Adrenal gland (tissue), 19 donors: ENCODE measurements at regions of chr1 and their contacts with region 1.

Region 1: GRCh38 chr1:182299728-182300616 is 91.6 kb downstream of the GLUL start:
- DNase-seq: peak; percentile 35 to 72 (median 54)
- H3K4me3 ChIP-seq: no peak overlapping the region
- H3K27ac ChIP-seq: peak overlapping the region in 1 of 5 donors; percentile 8
- H3K4me1 ChIP-seq: peaks cover 0 to 3% of the 10 kb centered on the region in 2 donors
- H3K27me3 ChIP-seq: no peaks in the 10 kb centered on the region
- CTCF ChIP-seq: no peak
- POLR2A ChIP-seq: no peak

Region 2: DNA sequence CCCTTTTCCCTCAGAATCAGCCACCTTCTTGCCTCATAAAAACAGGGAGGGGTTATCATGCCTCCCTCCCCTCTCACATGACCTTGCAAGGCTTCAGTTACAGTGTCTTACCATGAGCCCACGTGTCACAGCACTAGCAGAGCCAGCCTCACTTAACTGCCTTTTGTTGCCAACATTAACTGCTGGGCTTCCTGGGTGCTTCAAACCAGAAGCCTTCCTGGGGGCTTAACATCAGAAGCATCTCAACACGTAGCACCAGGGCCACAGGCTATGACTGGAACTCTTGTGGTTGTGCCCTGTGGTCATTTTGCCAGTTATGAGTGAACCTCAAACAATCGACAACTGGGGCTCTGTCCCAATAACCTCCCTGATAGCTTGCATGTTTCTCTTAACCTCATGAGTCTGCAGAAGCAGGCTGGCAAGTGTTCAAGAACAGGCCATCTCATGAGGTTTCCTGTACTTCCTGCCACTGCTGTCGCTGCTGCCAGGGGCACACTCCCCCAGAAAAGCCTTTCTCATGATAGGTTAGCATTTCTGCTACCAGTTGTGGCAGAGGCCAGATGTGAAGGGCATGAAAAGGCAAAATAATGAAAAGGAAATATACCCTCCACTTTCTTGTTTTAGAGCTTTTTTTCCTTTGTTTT is 40.6 kb before region 1 on chr1:
- intact Hi-C with region 1: no loop called
- DNase-seq: peak; percentile 38 to 85 (median 74)
- H3K4me3 ChIP-seq: no peak overlapping the region
- H3K27ac ChIP-seq: peak overlapping the region in 3 of 5 donors; percentile 5 to 80 (median 69)
- H3K4me1 ChIP-seq: peaks cover 0 to 9% of the 10 kb centered on the region in 2 donors
- H3K27me3 ChIP-seq: no peaks in the 10 kb centered on the region
- CTCF ChIP-seq: no peak
- POLR2A ChIP-seq: no peak

Region 3: GRCh38 chr1:182330303-182330702 is 30.3 kb after region 1 on chr1:
- intact Hi-C with region 1: loop called in 1 of 2 experiments (anchors 5 kb)
- DNase-seq: peak in 4 of 7 donors; percentile 21 to 55 (median 32)
- H3K4me3 ChIP-seq: no peak overlapping the region
- H3K27ac ChIP-seq: no peak overlapping the region
- H3K4me1 ChIP-seq: no peaks in the 10 kb centered on the region
- H3K27me3 ChIP-seq: no peaks in the 10 kb centered on the region
- CTCF ChIP-seq: no peak
- POLR2A ChIP-seq: no peak